ENCODE measurements at regions of chr3 and their contacts with region 1.

Region 1: DNA sequence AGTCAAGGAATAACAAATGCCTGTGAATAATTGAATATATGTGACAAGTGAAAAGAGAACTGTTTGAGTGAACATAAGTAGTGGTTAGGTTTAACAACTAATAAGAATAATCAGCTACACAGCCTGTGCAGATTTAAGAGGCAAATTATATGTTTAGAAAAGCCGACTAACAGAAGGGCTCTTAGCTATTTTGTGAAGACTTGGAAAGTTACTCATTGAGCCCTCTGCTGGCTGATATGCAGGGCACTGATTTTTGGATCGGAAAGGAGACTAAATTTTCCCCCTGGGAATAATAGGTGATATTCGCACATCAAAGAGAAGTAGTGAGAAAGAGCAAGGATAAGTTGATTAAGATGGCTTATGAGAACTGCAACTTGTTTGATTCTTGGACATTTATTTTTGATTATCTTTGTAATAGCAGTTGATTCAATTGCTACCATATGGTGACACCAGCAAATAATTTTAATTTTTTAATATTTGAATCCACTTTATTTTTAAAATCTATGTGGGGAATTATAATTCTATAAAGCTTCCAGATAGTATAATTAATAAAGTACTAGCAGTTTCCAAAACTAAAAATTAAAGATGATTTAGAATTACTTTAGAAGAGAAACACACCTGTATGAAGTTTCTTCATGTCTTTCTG is 156.2 kb downstream of the NLGN1 start:
- DNase-seq: peak; percentile 42
- ATAC-seq: peak; percentile 80
- H3K4me3 ChIP-seq: no peak overlapping the region
- H3K27ac ChIP-seq: no peak overlapping the region
- H3K4me1 ChIP-seq: no peaks in the 10 kb centered on the region
- H3K27me3 ChIP-seq: no peaks in the 10 kb centered on the region
- CTCF ChIP-seq: peak; percentile 62
- POLR2A ChIP-seq: no peak
- RAD21 ChIP-seq: peak; percentile 53

Region 2: DNA sequence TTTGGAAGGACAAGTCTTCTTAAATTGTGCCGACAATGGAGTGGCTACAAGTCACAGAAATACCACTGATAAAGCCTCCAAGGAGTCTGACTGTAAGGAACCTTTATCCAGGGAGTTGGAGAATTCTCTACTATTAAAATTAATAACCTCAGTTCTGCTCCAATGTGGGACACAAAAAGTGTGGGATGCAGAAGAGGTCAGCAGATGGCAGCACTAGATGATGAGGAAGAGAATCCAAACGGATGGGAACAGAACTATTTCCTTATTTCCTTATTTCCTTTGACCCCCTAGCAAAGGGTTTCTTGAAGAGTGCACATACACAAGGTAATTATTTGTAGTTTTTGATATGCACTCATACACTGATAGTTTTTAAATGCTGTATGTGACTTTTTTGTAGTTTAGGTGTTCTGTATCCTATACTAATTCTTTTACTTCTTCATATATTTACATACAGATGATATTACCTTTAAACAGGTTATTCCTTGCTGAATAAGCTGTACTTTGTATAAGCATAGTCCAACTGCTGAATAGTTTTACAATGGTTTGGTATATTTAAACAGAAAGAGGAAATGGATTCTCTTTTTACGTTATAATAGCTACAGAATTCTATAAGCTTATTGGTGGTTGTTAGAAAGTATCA is 181.8 kb before region 1 on chr3:
- CTCF ChIA-PET with region 1: interaction called, 5 read pairs
- POLR2A ChIA-PET with region 1: no interaction called
- dilution Hi-C with region 1: no loop called
- in situ Hi-C with region 1: no loop called
- intact Hi-C with region 1: loop called (anchors 2 kb)
- DNase-seq: peak; percentile 34
- ATAC-seq: peak; percentile 86
- H3K4me3 ChIP-seq: no peak overlapping the region
- H3K27ac ChIP-seq: no peak overlapping the region
- H3K4me1 ChIP-seq: no peaks in the 10 kb centered on the region
- H3K27me3 ChIP-seq: no peaks in the 10 kb centered on the region
- CTCF ChIP-seq: peak; percentile 63
- POLR2A ChIP-seq: no peak
- RAD21 ChIP-seq: peak; percentile 59

Region 3: DNA sequence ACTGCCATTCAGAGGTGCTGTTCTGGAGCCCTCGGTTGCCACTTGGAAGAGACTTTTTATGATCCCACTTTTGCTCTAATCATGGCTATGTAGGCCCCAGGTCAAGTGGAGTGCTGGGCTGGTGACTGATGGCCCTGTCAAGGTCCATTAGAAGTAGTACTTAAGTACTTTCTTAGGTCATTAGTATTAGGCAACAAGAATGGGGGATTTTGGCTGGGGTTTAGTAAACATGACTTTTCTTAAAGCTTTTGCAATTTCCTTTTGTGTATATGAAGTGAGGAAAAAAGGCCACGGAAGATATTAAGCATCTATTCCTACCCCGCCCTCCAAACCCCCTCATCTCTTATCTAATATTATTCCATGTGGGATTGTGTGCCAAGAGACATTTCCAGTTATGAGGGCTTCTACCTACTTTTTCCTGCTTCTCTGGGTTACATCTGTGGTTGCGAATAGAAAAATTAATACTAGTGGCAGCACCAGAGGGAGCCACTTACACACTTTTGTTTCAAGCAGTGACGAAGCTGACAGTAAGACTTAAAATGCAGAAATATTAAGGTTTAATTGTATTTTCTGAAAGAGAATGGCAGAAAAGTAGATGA is 142.3 kb before region 1 on chr3:
- CTCF ChIA-PET with region 1: interaction called, 4 read pairs
- POLR2A ChIA-PET with region 1: no interaction called
- dilution Hi-C with region 1: no loop called
- in situ Hi-C with region 1: no loop called
- intact Hi-C with region 1: loop called (anchors 1 kb)
- DNase-seq: peak; percentile 51
- ATAC-seq: peak; percentile 76
- H3K4me3 ChIP-seq: no peak overlapping the region
- H3K27ac ChIP-seq: no peak overlapping the region
- H3K4me1 ChIP-seq: no peaks in the 10 kb centered on the region
- H3K27me3 ChIP-seq: no peaks in the 10 kb centered on the region
- CTCF ChIP-seq: peak; percentile 63
- POLR2A ChIP-seq: no peak
- RAD21 ChIP-seq: peak; percentile 62

Region 4: DNA sequence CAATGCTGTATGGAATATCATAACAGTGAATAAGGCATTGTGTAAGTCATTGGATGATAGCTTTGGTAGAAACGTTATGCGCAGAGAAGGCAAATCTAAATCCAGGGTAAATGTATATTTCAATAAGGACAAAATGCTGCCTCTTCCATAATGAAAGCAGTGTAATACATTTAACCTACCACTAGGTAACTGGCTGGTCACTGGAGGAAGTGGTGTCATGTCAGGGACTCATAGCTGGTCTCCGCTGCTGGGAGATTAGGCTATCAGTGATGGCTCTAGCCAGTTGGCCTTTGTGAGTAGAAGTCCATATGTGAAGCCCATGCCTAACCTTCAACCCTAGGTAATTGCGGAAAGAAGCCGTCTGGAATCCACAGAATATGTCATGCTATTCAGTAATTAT is 15.3 kb before region 1 on chr3:
- CTCF ChIA-PET with region 1: interaction called, 10 read pairs
- POLR2A ChIA-PET with region 1: no interaction called
- dilution Hi-C with region 1: no loop called
- in situ Hi-C with region 1: no loop called
- intact Hi-C with region 1: no loop called
- DNase-seq: no peak
- ATAC-seq: no peak
- H3K4me3 ChIP-seq: no peak overlapping the region
- H3K27ac ChIP-seq: no peak overlapping the region
- H3K4me1 ChIP-seq: no peaks in the 10 kb centered on the region
- H3K27me3 ChIP-seq: no peaks in the 10 kb centered on the region
- CTCF ChIP-seq: no peak
- POLR2A ChIP-seq: no peak
- RAD21 ChIP-seq: no peak

Region 5: GRCh38 chr3:173745952-173746682 is 192.4 kb after region 1 on chr3:
- CTCF ChIA-PET with region 1: no interaction called
- POLR2A ChIA-PET with region 1: no interaction called
- dilution Hi-C with region 1: no loop called
- in situ Hi-C with region 1: no loop called
- intact Hi-C with region 1: no loop called
- DNase-seq: peak; percentile 56
- ATAC-seq: no peak
- H3K4me3 ChIP-seq: no peak overlapping the region
- H3K27ac ChIP-seq: no peak overlapping the region
- H3K4me1 ChIP-seq: peaks cover 2% of the 10 kb centered on the region; the same call in 1 of the 2 replicates
- H3K27me3 ChIP-seq: no peaks in the 10 kb centered on the region
- CTCF ChIP-seq: no peak
- POLR2A ChIP-seq: no peak
- RAD21 ChIP-seq: no peak